ENCODE measurements at regions of chr1 and their contacts with region 1.

Region 1: GRCh38 chr1:25796811-25797458 is 3.1 kb upstream of the SELENON start:
- DNase-seq: peak; percentile 91 to 95
- ATAC-seq: peak; percentile 70
- H3K4me3 ChIP-seq: no peak overlapping the region
- H3K27ac ChIP-seq: no peak overlapping the region
- H3K4me1 ChIP-seq: no peaks in the 10 kb centered on the region
- H3K27me3 ChIP-seq: no peaks in the 10 kb centered on the region

Region 2: DNA sequence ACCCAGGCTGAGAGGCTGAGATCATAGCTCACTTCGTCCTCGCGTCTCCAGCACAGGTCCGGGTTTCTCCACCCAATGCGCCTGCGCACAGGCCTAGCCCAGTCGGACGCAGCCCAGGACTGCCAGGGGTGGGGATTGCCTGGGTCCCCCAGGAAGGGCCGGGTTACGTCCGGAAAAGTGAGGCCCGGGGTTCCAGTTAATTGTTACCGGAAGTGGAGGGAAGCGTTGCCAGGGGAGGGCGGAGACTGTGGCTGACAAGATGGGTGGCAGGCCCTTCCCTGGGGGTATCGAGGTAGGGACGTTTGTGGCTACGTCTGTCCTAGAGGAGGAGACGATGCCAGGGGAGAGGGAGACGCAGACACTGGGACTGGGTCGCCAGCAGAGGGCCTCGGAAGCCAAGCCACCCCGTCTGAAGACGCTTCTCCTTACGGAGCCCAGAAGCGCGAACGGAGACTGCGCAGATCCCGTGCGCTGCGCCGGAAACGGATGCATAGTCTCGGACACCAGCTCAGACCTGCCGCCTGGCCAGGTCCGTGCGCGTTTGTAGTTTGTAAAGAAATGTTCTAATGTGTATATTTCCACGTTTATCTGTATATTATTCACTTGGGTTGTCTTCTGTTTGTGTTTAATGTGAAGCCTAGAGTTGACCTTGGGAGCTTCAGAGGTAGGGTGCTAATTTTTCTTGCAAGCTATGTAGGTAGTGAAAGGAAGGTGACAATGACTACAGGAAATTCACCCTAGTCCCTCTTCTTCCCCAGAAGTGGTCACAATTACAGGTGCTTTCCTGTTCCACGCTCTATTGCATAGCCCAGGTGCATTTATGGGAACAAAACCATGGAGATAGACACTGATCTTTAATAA is 557.0 kb before region 1 on chr1:
- intact Hi-C with region 1: loop called in 1 of 2 experiments (anchors 10 kb)
- DNase-seq: peak; percentile 96 to 97
- ATAC-seq: peak; percentile 94
- H3K4me3 ChIP-seq: peak overlapping the region; percentile 8 to 10
- H3K27ac ChIP-seq: peak overlapping the region in 1 of 2 donors; percentile 81
- H3K4me1 ChIP-seq: no peaks in the 10 kb centered on the region
- H3K27me3 ChIP-seq: no peaks in the 10 kb centered on the region

Region 3: GRCh38 chr1:25549273-25550154 is 247.4 kb before region 1 on chr1:
- intact Hi-C with region 1: loop called in 1 of 2 experiments (anchors 5 kb)
- DNase-seq: peak in 1 of 2 donors; percentile 77
- ATAC-seq: peak; percentile 39
- H3K4me3 ChIP-seq: no peak overlapping the region
- H3K27ac ChIP-seq: peak overlapping the region; percentile 54 to 74
- H3K4me1 ChIP-seq: peaks cover 3% of the 10 kb centered on the region in 2 donors
- H3K27me3 ChIP-seq: no peaks in the 10 kb centered on the region

Region 4: DNA sequence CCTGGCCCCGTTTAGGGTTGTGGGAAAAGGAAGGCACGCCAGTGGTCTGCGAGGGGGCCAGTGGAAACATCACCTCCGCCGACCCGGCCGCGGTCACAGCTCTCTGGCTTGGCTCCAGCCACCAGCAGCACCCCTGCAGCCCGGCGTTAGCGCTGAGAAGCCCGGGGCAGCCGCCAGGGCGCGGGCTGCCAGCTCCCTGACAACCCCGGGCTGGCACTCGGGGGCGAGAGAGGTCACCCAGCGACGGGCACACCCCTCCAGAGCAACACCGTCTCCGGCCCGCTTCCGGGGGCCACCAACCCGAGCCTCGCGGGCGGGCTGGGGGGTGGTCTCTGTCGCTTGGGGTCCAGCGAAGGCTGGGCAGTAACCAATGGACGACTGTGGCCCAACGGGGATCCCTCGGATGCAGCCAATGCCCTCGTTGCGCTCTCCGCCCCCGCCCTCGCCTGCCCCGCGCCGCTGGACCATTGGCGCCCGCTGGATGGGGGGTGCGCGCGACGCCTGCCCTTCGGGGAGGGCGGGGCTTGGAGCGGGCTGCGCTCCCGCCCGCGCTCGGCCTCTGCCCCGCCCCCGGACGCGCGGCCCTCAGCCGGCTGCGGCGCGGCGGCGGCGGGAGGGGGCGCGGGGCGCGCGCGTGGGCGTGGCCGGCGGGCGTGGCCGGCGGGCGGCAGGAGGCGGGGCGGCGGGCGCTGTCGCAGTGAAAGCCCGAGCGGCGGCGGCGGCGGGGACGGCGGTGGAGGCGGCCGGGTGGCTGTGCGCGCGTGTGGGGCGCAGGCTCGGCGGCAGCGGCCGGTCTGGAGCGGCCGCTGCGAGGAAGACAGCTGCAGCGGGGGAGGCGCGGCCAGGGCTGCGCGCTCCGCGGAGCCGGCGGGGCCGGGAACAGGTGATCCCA is 180.6 kb before region 1 on chr1 and contains the start of gene MAN1C1:
- intact Hi-C with region 1: loop called (anchors 2 to 5 kb)
- DNase-seq: peak; percentile 93 to 96
- ATAC-seq: peak; percentile 93
- H3K4me3 ChIP-seq: peak within 1 kb of the TSS; percentile 58 to 79
- H3K27ac ChIP-seq: peak within 1 kb of the TSS in 1 of 2 donors; percentile 53
- H3K4me1 ChIP-seq: peaks cover 0 to 6% of the 10 kb centered on the region in 2 donors
- H3K27me3 ChIP-seq: no peaks in the 10 kb centered on the region
- total RNA-seq, gene MAN1C1: 13.5 to 32.2 TPM

Region 5: GRCh38 chr1:25627783-25628182 is 169.2 kb before region 1 on chr1:
- intact Hi-C with region 1: no loop called
- DNase-seq: no peak
- ATAC-seq: no peak
- H3K4me3 ChIP-seq: no peak overlapping the region
- H3K27ac ChIP-seq: no peak overlapping the region
- H3K4me1 ChIP-seq: no peaks in the 10 kb centered on the region
- H3K27me3 ChIP-seq: no peaks in the 10 kb centered on the region

Region 6: GRCh38 chr1:25727635-25728330 is 69.2 kb before region 1 on chr1:
- intact Hi-C with region 1: no loop called
- DNase-seq: peak; percentile 76 to 85
- ATAC-seq: peak; percentile 80
- H3K4me3 ChIP-seq: no peak overlapping the region
- H3K27ac ChIP-seq: no peak overlapping the region
- H3K4me1 ChIP-seq: no peaks in the 10 kb centered on the region
- H3K27me3 ChIP-seq: no peaks in the 10 kb centered on the region

Region 7: GRCh38 chr1:25743826-25744581 is 52.9 kb before region 1 on chr1:
- intact Hi-C with region 1: loop called in 1 of 2 experiments (anchors 5 kb)
- DNase-seq: peak; percentile 72 to 77
- ATAC-seq: peak; percentile 80
- H3K4me3 ChIP-seq: no peak overlapping the region
- H3K27ac ChIP-seq: peak overlapping the region; percentile 8 to 95
- H3K4me1 ChIP-seq: no peaks in the 10 kb centered on the region
- H3K27me3 ChIP-seq: no peaks in the 10 kb centered on the region